MCF 10A (cell line): ENCODE measurements at regions of chr3 and their contacts with region 1.

Region 1: GRCh38 chr3:73508330-73508954 is 116.3 kb downstream of the PDZRN3 start:
- DNase-seq: peak; percentile 72
- H3K4me3 Mint-ChIP-seq: no peak overlapping the region
- H3K27ac Mint-ChIP-seq: no peak overlapping the region
- H3K4me1 Mint-ChIP-seq: no peaks in the 10 kb centered on the region
- H3K27me3 Mint-ChIP-seq: no peaks in the 10 kb centered on the region
- CTCF ChIP-seq: peak; percentile 71

Region 2: GRCh38 chr3:73497646-73498406 is 10.6 kb before region 1 on chr3:
- CTCF ChIA-PET with region 1: interaction called, 42 read pairs
- POLR2A ChIA-PET with region 1: no interaction called
- intact Hi-C with region 1: no loop called
- DNase-seq: no peak
- H3K4me3 Mint-ChIP-seq: no peak overlapping the region
- H3K27ac Mint-ChIP-seq: no peak overlapping the region
- H3K4me1 Mint-ChIP-seq: peaks cover 4% of the 10 kb centered on the region
- H3K27me3 Mint-ChIP-seq: peaks cover 10% of the 10 kb centered on the region
- CTCF ChIP-seq: no peak

Region 3: DNA sequence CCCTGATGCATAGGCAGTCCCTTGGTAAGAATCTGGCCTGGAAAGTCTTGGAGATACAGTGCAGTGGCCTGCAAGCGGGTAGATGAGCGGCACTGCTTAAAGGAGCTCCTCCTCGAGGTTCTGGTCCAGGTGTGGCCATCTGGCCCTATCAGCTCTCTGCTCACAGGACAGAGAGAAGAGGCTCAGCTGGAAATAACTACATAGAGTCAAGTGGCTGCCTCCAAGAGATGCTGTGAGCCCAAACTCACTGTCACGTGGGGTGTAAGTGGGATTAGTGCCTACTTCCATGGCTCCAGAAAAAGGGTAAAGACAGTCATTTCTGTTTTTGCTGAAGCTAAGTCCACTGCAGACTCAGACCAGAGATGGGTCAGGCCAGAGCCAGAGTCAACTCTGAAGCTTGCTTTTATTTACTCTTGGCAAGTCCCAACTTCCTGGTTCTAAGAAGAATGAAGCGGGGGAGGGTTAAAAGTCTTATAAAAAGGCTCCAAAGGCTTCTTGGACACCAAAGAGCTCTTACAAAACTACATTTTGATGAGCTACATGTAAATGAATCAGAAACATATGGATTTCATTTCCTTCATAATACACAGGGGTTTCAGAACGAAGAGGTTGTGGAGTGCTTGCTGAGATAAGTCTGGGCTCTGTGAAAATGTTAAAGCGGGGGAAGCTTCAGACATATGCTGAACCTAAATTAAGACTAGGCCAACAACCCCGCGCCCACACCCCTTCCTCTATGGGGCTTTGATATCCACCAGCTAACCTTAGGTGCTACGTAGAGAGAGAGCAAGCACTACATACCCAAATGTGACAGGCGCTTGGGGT is 39.2 kb after region 1 on chr3:
- CTCF ChIA-PET with region 1: interaction called, 15 read pairs
- POLR2A ChIA-PET with region 1: no interaction called
- intact Hi-C with region 1: no loop called
- DNase-seq: peak; percentile 9
- H3K4me3 Mint-ChIP-seq: no peak overlapping the region
- H3K27ac Mint-ChIP-seq: no peak overlapping the region
- H3K4me1 Mint-ChIP-seq: peaks cover 12% of the 10 kb centered on the region
- H3K27me3 Mint-ChIP-seq: no peaks in the 10 kb centered on the region
- CTCF ChIP-seq: no peak

Region 4: GRCh38 chr3:73832426-73832825 is 324.0 kb after region 1 on chr3:
- CTCF ChIA-PET with region 1: interaction called, 15 read pairs
- POLR2A ChIA-PET with region 1: no interaction called
- intact Hi-C with region 1: no loop called
- DNase-seq: no peak
- H3K4me3 Mint-ChIP-seq: no peak overlapping the region
- H3K27ac Mint-ChIP-seq: no peak overlapping the region
- H3K4me1 Mint-ChIP-seq: no peaks in the 10 kb centered on the region
- H3K27me3 Mint-ChIP-seq: no peaks in the 10 kb centered on the region
- CTCF ChIP-seq: no peak